Activated T-helper 2 cell treated with anti-CD3 and anti-CD28 coated beads, Interferon-gamma antibody, Interleukin-2, Interleukin-4, amounts not matched to agents 10 μg/mL and 5 μg/mL and 100 μg/mL, durations not matched to agents 14 hours and 24 hours and 36 hours (primary cell): ENCODE measurements at regions of chr11 and their contacts with region 1.

Region 1: GRCh38 chr11:48307760-48308386 is 1.9 kb downstream of the OR4S1 start:
- DNase-seq: peak; percentile 48
- H3K4me3 Mint-ChIP-seq: no peak overlapping the region
- H3K27ac Mint-ChIP-seq: no peak overlapping the region
- H3K4me1 Mint-ChIP-seq: no peaks in the 10 kb centered on the region
- H3K27me3 Mint-ChIP-seq: peaks cover 1% of the 10 kb centered on the region

Region 2: DNA sequence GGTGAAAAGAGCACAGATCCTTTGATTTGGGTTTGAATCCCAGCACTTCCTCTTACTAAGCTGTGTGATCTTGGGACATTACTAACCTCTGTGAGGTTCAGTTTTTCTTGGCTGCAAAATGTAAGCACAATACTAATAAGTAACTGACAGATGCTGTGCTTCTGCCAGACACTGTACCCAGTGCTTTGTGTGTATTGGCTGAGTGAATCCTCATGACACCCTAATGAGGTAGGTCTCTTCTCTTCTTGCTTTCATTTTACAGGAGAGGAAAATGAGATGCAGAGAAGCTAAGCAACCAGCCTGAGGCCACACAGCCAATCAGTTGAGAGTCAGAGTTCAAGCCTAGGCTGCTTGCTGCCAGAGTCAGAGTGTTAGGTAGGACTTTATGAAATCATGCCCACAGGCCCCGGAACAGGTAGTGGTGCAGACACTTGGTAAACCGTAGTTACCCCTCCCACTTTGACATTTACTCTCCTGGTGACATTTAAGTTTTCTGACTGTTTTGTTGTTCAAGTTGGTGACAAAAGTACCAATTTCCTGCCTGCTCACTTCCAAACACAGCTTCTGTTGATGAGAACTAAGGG is 306.3 kb before region 1 on chr11:
- intact Hi-C with region 1: no loop called
- DNase-seq: peak; percentile 87
- H3K4me3 Mint-ChIP-seq: peak overlapping the region; percentile 69
- H3K27ac Mint-ChIP-seq: peak overlapping the region; percentile 99
- H3K4me1 Mint-ChIP-seq: peaks cover 70% of the 10 kb centered on the region
- H3K27me3 Mint-ChIP-seq: no peaks in the 10 kb centered on the region

Region 3: GRCh38 chr11:48129697-48130395 is 178.0 kb before region 1 on chr11:
- intact Hi-C with region 1: no loop called
- DNase-seq: no peak
- H3K4me3 Mint-ChIP-seq: no peak overlapping the region
- H3K27ac Mint-ChIP-seq: no peak overlapping the region
- H3K4me1 Mint-ChIP-seq: peaks cover 19% of the 10 kb centered on the region
- H3K27me3 Mint-ChIP-seq: no peaks in the 10 kb centered on the region

Region 4: GRCh38 chr11:48172818-48173609 is 134.9 kb before region 1 on chr11:
- intact Hi-C with region 1: loop called (anchors 5 kb)
- DNase-seq: peak; percentile 37
- H3K4me3 Mint-ChIP-seq: no peak overlapping the region
- H3K27ac Mint-ChIP-seq: no peak overlapping the region
- H3K4me1 Mint-ChIP-seq: peaks cover 10% of the 10 kb centered on the region
- H3K27me3 Mint-ChIP-seq: no peaks in the 10 kb centered on the region

Region 5: DNA sequence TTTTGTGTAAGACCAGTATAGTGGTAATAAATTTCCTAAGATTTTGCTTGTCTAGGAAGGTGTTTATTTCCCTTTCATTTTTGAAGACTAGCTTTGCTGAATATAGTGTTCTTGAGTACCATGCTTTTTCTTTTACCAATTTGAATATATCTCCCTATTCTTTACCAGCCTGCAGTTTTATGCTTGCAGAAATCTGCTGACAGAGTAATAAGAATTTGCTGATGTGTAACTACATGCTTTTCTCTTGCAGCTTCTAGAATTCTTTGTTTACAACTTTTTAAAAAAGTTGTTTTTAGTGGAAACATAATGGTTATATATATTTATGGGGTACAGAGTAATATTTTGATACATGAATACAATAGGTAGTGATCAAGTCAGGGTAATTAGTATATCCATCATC is 1225.3 kb after region 1 on chr11:
- intact Hi-C with region 1: loop called (anchors 5 kb)
- DNase-seq: no peak
- H3K4me3 Mint-ChIP-seq: no peak overlapping the region
- H3K27ac Mint-ChIP-seq: no peak overlapping the region
- H3K4me1 Mint-ChIP-seq: no peaks in the 10 kb centered on the region
- H3K27me3 Mint-ChIP-seq: no peaks in the 10 kb centered on the region